ENCODE measurements at regions of chr9 and their contacts with region 1.

Region 1: GRCh38 chr9:130707225-130707976 is 13.8 kb downstream of the EXOSC2 start:
- DNase-seq: peak; percentile 84
- ATAC-seq: peak; percentile 45

Region 2: DNA sequence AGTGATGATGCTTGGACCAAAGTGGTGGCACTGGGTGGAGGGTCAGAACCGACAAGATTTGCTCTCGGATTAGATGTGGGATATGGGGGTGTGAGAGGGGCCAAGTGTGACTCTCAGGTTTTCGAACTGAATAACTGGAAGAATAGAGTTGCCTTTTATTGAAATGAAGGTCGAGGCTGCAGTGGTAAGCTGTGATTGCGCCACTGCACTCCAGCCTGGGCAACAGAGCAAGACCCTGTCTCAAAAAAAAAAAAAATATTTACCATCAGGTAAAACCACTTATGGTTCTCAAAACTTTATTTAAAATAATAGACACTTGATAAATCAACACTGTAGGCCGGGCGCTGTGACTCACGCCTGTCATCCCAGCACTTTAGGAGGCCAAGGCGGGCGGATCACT is 13.4 kb after region 1 on chr9:
- intact Hi-C with region 1: no loop called
- DNase-seq: no peak
- ATAC-seq: no peak

Region 3: GRCh38 chr9:130860458-130861316 is 153.3 kb after region 1 on chr9:
- intact Hi-C with region 1: loop called (anchors 5 kb)
- DNase-seq: peak; percentile 87
- ATAC-seq: peak; percentile 93

Region 4: GRCh38 chr9:130940693-130941576 is 233.5 kb after region 1 on chr9:
- intact Hi-C with region 1: loop called (anchors 5 kb)
- DNase-seq: peak; percentile 77
- ATAC-seq: peak; percentile 85

Region 5: DNA sequence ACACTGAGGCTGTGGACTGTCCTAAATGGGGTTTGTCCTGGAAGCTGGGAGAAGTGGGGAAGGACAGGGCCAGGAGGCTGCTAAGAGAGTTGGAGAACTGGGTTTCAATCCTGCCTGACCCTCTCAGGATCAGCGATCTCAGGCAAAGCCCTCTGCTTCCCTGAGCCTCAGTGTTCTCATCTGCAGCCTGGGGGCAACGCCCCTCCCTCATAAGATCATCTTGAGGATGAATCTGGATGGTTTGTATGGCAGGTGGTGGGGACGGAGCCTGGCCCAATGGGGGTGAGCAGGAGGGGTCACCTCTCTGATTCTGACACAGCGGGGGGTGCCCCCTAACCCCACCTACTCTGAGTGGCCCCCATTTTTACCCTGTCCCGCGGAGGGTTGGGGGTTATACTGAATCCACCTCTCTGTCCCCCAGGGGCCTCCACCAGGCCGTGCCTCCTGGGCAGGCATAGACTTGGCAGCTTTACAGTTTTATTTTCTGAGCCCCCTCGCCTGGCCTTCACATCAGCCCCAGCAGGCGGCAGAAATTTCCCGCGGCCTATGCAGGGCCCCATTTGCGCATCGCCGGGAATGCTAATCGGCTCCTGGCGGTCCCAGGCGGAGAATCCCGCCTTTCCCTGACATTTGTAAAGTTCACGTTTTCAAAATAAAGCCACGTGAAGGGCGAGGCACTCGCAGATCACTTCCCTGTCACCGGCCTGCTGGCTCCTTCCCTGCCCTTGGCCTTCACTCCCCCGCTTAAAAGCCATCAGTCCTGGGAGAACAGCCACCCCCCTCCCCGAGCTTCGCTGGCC is 283.8 kb after region 1 on chr9:
- intact Hi-C with region 1: loop called (anchors 5 kb)
- DNase-seq: no peak
- ATAC-seq: no peak

Measured in sciatic nerve (tissue), 2 donors.